ENCODE measurements at regions of chr1 and their contacts with region 1.

Region 1: DNA sequence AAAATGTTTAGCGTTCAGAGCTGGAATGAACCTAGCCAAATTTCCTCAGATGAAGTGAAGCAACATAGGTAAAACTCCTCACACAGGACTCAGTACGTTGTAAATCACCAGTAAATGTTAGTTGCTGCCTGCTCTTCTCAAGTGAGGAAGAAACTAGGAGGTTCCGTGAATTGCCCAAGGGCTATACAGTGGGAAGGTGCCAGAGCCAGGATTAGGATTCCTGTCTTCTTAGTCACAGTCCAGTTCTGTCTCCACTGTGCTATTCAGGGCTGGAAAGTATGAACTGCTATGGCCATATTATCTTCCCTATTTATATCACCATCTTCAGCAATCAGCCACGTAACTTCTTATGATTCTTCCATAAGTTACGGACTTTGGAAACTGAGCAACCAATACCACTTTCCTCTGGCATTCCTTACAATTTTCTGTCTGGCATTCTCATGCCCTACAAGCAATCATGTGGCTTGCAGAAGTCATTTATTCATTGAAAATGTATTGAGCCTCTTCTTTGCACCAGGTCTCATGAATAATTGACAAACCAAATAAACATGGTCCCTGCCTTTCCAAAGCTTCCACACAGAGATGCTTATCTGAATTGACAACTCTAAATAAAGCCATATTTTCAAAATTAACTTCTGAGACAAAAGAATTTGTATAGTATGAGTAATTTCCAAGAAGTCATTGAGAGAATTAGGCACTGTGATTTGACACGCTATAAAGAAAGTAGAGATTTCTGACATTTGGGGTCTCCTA is 271.6 kb upstream of the SGIP1 start:
- DNase-seq: no peak

Region 2: DNA sequence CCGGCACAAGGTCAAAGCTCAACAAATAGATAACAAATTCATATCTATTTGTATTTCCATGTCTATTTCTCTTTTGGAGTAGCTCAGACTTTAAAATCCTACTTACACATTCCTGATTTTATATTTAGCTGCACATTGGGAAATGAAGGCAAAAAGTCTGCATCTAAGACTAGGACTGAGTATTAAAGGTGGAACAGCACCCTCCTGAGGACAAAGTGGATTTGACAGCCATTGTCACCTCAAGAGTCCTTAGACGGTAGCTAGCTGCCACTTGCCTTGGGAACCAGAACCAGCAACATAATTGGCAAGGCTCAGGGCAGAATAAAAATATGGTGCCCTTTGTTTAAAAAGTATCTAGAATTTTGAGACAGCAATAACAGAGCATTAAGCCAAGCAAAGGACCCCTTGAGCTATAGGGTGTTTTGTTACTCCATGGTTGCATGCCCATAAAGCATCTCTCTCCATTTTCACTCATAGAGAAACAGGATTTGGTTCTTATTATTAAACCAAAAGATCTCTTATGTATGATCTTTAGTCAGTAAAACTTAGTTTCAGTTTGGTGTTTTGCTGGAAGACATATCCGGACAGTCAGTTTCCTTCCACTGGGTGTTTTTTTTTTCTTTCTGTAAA is 241.6 kb after region 1 on chr1:
- intact Hi-C with region 1: loop called in 1 of 2 experiments (anchors 5 kb)
- DNase-seq: no peak